ENCODE measurements at regions of chr12 and their contacts with region 1.

Region 1: GRCh38 chr12:50986966-50987737 is 34.8 kb downstream of the HIGD1C start:
- DNase-seq: peak; percentile 35
- CTCF ChIP-seq: peak; percentile 60

Region 2: DNA sequence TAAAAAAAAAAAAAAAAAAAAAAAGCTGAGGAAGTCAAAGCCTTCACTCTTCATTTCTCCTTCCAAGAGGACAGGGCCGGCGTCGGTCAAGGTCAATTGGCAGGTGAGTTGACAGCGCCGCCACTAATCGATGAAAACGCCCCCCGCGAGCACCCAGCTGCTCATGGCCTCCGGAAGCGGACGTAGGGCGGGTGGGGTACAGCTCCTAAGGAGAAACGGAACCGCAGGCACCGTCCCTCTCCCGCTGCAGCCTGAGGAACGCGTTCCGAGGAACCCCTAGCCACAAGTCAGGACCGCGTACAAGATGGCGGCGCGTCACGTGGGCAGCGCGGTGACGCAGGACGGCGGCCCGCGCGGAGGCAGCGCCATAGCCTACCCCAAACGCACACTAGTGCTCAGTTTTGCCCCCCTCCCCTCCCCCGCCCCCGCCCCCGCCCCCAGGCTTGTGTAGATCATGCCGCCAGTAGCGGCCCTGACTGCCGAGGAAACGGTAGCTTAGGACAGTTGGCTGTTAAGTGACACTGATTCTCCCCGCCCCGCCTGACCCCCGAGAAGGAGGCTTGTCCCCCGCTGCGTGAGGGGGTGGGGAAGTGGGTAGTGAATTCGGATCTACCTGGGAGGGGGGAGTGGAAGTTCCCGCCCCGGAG is 223.4 kb before region 1 on chr12 and contains the start of gene ATF1:
- CTCF ChIA-PET with region 1: interaction called, 24 read pairs
- POLR2A ChIA-PET with region 1: interaction called, 5 read pairs
- DNase-seq: peak; percentile 94
- CTCF ChIP-seq: no peak

Region 3: GRCh38 chr12:50825372-50825838 is 161.7 kb before region 1 on chr12:
- CTCF ChIA-PET with region 1: interaction called, 29 read pairs
- POLR2A ChIA-PET with region 1: no interaction called
- DNase-seq: peak; percentile 49
- CTCF ChIP-seq: peak; percentile 32

Region 4: DNA sequence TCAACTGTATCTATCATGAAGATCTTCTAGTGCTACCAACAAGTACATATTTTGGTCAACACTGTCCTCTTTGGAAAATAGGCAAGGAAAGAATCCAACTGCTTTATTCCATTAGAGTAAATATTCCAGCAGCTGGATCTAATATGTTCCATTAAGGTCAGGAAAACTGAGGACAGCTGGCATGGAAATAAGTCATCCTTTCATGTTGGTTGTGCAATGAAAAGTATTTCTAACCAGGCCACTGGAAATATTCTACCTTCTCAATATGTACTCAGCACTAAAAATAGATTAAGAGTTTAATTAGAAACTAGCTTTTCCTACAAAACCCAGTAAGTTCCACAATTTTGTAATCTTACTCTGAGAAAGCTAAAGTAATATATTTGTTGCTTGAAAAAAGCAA is 15.2 kb before region 1 on chr12:
- CTCF ChIA-PET with region 1: no interaction called
- POLR2A ChIA-PET with region 1: no interaction called
- DNase-seq: no peak
- CTCF ChIP-seq: no peak

Region 5: DNA sequence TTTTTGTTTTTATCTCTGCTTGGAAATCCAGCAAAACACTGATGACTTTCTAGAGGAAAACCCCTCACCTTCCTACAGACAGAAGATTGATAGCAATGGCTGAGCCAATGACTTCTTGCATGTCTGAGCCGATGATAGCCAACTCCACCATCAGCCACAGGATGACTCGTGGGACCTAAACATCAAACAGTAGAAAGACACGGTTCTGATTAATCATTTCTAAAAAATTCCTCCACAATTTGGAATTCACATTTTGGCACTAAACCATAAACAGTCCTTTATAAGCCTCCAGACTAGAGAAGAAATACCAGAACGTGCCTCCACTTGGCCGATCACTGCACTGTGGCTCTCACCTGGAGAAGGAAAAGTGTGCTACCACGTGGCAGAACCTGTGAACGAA is 13.1 kb after region 1 on chr12:
- CTCF ChIA-PET with region 1: interaction called, 11 read pairs
- POLR2A ChIA-PET with region 1: no interaction called
- DNase-seq: no peak
- CTCF ChIP-seq: no peak